ENCODE measurements at regions of chr1 and their contacts with region 1.

Region 1: DNA sequence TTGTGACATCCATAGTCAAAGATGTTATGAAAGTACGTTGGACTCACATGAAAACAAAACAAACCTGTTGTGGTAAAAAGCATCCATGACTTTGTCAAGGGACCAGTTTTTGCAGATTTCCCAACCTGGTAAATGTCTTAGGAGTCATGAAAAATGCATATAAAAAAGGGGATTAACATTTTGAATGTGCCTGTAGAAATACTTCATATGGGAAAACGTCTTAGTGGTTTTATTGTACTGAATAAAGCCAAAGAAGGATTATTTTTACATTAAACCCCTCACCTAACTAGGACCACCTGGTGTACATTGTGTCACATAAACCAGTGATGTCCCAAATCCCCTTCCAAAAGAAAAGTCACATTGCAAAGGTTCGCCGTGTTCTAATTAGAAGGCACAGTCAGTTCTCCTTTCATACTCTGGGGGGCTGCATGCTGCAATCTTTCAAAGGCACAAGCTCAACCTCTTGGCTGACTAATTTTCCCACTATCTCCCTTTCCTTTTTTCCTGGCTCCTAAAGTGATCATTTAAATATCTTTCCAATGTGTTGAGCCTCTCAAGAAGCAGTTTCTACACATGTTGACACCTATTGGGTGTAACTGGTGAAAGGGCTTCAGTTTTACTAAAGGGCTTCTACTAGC is 119.8 kb upstream of the SPAG17 start:
- DNase-seq: no peak
- ATAC-seq: 0 out of 3 replicates have a peak, but pooled peaks have one; percentile 41
- H3K4me3 ChIP-seq: no peak overlapping the region
- H3K27ac ChIP-seq: no peak overlapping the region
- H3K4me1 ChIP-seq: no peaks in the 10 kb centered on the region
- H3K27me3 ChIP-seq: no peaks in the 10 kb centered on the region
- CTCF ChIP-seq: peak in 1 of 3 experiments; percentile 7; a peak in 1 of 6 replicates
- EP300 ChIP-seq: no peak
- POLR2A ChIP-seq: no peak
- RAD21 ChIP-seq: peak; percentile 38 to 64; a peak in 3 of 4 replicates

Region 2: DNA sequence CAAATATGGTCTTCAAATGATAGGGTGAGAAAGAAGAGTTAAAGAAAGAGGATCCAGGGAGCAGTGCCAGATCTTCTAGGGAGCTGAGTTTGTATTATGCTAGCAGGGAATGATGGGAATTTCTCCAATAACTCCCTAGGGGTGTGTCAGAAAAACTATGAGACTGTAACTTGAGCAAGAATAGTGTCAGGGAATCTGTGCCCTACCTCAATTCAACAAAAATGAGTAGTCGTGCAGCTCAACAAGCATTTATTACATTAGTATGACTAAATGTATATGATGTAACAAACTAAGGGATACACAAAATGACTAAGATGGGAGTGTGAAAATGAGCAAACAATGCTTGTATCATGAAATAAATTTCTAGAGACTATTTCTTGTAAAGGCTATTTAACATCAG is 144.0 kb before region 1 on chr1:
- CTCF ChIA-PET with region 1: no interaction called
- POLR2A ChIA-PET with region 1: no interaction called
- in situ Hi-C with region 1: no loop called
- intact Hi-C with region 1: loop called (anchors 5 kb)
- DNase-seq: no peak
- ATAC-seq: no peak
- H3K4me3 ChIP-seq: no peak overlapping the region
- H3K27ac ChIP-seq: no peak overlapping the region
- H3K4me1 ChIP-seq: no peaks in the 10 kb centered on the region; a peak in 1 of 5 replicates
- H3K27me3 ChIP-seq: no peaks in the 10 kb centered on the region
- CTCF ChIP-seq: no peak
- EP300 ChIP-seq: no peak
- POLR2A ChIP-seq: no peak
- RAD21 ChIP-seq: no peak

Region 3: GRCh38 chr1:118266436-118266835 is 38.4 kb before region 1 on chr1:
- CTCF ChIA-PET with region 1: no interaction called
- POLR2A ChIA-PET with region 1: no interaction called
- in situ Hi-C with region 1: no loop called
- intact Hi-C with region 1: no loop called
- DNase-seq: no peak
- ATAC-seq: no peak
- H3K4me3 ChIP-seq: no peak overlapping the region
- H3K27ac ChIP-seq: no peak overlapping the region
- H3K4me1 ChIP-seq: no peaks in the 10 kb centered on the region
- H3K27me3 ChIP-seq: no peaks in the 10 kb centered on the region
- CTCF ChIP-seq: no peak
- EP300 ChIP-seq: no peak
- POLR2A ChIP-seq: no peak
- RAD21 ChIP-seq: no peak

Region 4: DNA sequence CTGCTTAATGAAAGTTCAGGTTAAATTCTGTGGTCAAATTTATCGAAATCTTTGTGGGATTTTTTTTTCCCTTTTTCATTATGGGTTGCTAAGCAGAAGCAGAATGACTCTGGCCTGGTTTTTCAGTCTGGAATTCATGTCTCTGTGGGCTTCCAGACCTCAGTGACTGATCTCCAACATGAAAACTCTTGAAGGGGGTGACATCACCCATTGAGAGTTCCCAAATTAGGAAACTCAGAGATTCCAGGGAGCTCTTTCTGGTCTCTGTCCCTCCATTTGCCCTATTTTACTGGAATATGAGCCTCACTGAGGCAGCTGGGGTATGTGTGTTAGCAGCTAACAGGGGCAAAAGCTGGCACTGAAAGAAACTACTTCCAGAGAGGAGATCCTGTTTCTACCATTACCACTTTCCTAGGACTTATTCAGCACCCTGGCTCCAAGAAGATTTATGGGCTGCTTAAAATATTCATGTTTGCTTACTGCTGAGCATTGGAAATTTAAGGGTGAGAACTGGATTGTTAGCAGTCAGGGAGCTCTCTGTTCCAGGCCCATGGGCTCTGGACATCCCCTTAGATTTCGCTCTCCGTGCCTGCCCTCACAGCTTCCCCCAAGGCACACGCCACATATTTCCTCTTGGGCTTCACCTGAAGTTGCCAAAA is 83.6 kb after region 1 on chr1:
- CTCF ChIA-PET with region 1: no interaction called
- POLR2A ChIA-PET with region 1: no interaction called
- in situ Hi-C with region 1: no loop called
- intact Hi-C with region 1: no loop called
- DNase-seq: no peak
- ATAC-seq: no peak
- H3K4me3 ChIP-seq: no peak overlapping the region
- H3K27ac ChIP-seq: no peak overlapping the region
- H3K4me1 ChIP-seq: no peaks in the 10 kb centered on the region
- H3K27me3 ChIP-seq: no peaks in the 10 kb centered on the region
- CTCF ChIP-seq: no peak
- EP300 ChIP-seq: no peak
- POLR2A ChIP-seq: no peak
- RAD21 ChIP-seq: no peak

Measured in K562 (cell line).